ENCODE measurements at regions of chr11 and their contacts with region 1.

Region 1: DNA sequence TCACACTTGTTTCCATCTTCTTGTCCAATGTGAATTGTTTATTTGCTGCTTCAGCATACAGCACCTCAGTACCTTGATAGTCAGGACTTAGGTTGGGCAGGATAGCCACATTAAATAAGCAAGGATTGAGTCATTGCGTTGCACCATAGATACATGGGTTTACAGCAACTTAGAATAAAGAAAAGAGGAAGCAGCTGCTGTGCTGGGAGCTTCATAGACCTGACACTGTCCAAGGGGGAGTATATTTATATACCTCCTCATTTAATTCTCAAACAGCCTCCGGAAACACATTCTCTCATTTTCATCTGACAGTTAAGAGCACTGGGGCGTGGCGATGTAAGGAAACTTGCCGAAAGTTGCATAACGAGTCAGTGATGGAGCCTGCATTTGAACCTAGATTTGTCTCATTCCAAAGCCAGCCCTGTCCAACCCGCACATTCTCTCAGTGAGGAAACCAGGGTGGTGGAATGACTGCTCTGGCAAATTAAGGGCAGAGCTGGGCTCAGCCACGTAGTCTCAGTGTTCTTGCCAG is 42.2 kb downstream of the UBASH3B start:
- DNase-seq: peak; percentile 36 to 72 (median 53)
- H3K4me3 ChIP-seq: peak overlapping the region in 1 of 2 donors; percentile 39
- H3K4me3 Mint-ChIP-seq: peak overlapping the region; percentile 42 to 87 (median 76)
- H3K27ac ChIP-seq: peak overlapping the region; percentile 64
- H3K27ac Mint-ChIP-seq: peak overlapping the region; percentile 81 to 96 (median 93)
- H3K4me1 ChIP-seq: peaks cover 89% of the 10 kb centered on the region
- H3K4me1 Mint-ChIP-seq: peaks cover 66 to 93% (median 81%) of the 10 kb centered on the region in 4 donors
- H3K27me3 ChIP-seq: no peaks in the 10 kb centered on the region
- H3K27me3 Mint-ChIP-seq: no peaks in the 10 kb centered on the region

Region 2: DNA sequence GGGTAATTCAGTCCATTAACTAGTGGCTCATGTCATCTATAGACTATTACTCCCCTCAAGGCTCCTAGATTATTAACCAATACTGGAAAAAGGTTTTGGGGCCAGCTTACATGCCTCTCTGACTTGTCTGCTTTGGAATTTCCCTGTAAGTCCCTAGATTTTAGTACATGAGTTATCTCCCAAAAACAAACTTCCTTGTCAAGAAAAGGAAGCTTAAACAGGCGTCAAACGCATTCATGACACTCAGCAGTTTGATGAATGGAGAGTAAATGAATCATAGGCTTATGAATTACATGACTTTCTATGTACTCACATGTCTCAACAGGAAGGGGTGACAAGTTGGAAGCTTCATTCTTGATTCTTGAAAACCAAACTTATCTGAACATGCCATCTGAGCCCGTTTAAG is 652.5 kb before region 1 on chr11:
- CTCF ChIA-PET with region 1: no interaction called
- POLR2A ChIA-PET with region 1: no interaction called
- intact Hi-C with region 1: no loop called
- DNase-seq: no peak
- H3K4me3 ChIP-seq: no peak overlapping the region
- H3K4me3 Mint-ChIP-seq: no peak overlapping the region
- H3K27ac ChIP-seq: no peak overlapping the region
- H3K27ac Mint-ChIP-seq: no peak overlapping the region
- H3K4me1 ChIP-seq: no peaks in the 10 kb centered on the region
- H3K4me1 Mint-ChIP-seq: no peaks in the 10 kb centered on the region
- H3K27me3 ChIP-seq: no peaks in the 10 kb centered on the region
- H3K27me3 Mint-ChIP-seq: peaks cover 5 to 9% of the 10 kb centered on the region in 2 donors

Region 3: GRCh38 chr11:122655527-122656072 is 42.1 kb before region 1 on chr11 and contains the start of gene UBASH3B:
- CTCF ChIA-PET with region 1: interaction called, 69 read pairs
- POLR2A ChIA-PET with region 1: interaction called, 120 read pairs
- intact Hi-C with region 1: loop called (anchors 1 kb)
- DNase-seq: peak; percentile 63 to 68 (median 66)
- H3K4me3 ChIP-seq: peak within 1 kb of the TSS; percentile 55 to 86
- H3K4me3 Mint-ChIP-seq: peak within 1 kb of the TSS; percentile 97 to 98 (median 98)
- H3K27ac ChIP-seq: peak within 1 kb of the TSS; percentile 66
- H3K27ac Mint-ChIP-seq: peak within 1 kb of the TSS; percentile 88 to 98 (median 95)
- H3K4me1 ChIP-seq: peaks cover 44% of the 10 kb centered on the region
- H3K4me1 Mint-ChIP-seq: peaks cover 20 to 53% (median 40%) of the 10 kb centered on the region in 4 donors
- H3K27me3 ChIP-seq: no peaks in the 10 kb centered on the region
- H3K27me3 Mint-ChIP-seq: no peaks in the 10 kb centered on the region
- total RNA-seq, gene UBASH3B: 26.6 to 30.9 TPM

Region 4: GRCh38 chr11:122673701-122674100 is 24.0 kb before region 1 on chr11:
- CTCF ChIA-PET with region 1: interaction called, 36 read pairs
- POLR2A ChIA-PET with region 1: interaction called, 58 read pairs
- intact Hi-C with region 1: loop called (anchors 2 kb)
- DNase-seq: no peak
- H3K4me3 ChIP-seq: no peak overlapping the region
- H3K4me3 Mint-ChIP-seq: peak overlapping the region in 4 of 8 donors; percentile 22 to 60 (median 34)
- H3K27ac ChIP-seq: no peak overlapping the region
- H3K27ac Mint-ChIP-seq: peak overlapping the region in 6 of 7 donors; percentile 36 to 77 (median 61)
- H3K4me1 ChIP-seq: peaks cover 90% of the 10 kb centered on the region
- H3K4me1 Mint-ChIP-seq: peaks cover 50 to 91% (median 72%) of the 10 kb centered on the region in 4 donors
- H3K27me3 ChIP-seq: no peaks in the 10 kb centered on the region
- H3K27me3 Mint-ChIP-seq: no peaks in the 10 kb centered on the region

Region 5: DNA sequence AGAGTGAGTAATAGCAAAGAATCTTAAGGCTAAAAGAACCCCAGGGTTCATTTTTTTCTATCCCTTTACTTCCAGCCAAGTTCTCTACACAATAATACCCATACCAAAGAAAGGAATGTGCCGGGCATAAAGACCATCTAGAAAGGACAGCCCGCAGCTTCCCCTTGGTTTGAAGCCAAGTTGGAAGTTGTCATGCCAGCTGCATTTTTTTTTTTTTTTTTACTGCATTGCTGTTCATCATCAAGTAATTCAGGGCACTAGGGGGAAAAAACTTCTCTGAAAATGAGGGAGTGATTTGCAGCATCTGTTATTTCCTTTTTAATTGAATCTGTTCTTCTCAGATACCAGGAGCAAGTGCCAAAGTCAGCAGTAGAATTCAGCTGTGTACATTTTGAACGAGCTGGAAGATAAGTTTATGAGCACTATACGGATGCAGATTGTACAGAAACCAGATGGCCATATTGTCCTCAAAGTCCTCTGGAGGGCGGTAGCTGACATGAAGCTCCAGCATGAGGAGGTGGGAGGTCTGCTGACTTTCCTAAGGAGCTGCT is 14.2 kb after region 1 on chr11:
- CTCF ChIA-PET with region 1: interaction called, 5 read pairs
- POLR2A ChIA-PET with region 1: interaction called, 15 read pairs
- intact Hi-C with region 1: no loop called
- DNase-seq: no peak
- H3K4me3 ChIP-seq: no peak overlapping the region
- H3K4me3 Mint-ChIP-seq: no peak overlapping the region
- H3K27ac ChIP-seq: no peak overlapping the region
- H3K27ac Mint-ChIP-seq: peak overlapping the region in 1 of 7 donors; percentile 36
- H3K4me1 ChIP-seq: peaks cover 9% of the 10 kb centered on the region
- H3K4me1 Mint-ChIP-seq: peaks cover 18 to 54% (median 31%) of the 10 kb centered on the region in 4 donors
- H3K27me3 ChIP-seq: no peaks in the 10 kb centered on the region
- H3K27me3 Mint-ChIP-seq: no peaks in the 10 kb centered on the region

Region 6: DNA sequence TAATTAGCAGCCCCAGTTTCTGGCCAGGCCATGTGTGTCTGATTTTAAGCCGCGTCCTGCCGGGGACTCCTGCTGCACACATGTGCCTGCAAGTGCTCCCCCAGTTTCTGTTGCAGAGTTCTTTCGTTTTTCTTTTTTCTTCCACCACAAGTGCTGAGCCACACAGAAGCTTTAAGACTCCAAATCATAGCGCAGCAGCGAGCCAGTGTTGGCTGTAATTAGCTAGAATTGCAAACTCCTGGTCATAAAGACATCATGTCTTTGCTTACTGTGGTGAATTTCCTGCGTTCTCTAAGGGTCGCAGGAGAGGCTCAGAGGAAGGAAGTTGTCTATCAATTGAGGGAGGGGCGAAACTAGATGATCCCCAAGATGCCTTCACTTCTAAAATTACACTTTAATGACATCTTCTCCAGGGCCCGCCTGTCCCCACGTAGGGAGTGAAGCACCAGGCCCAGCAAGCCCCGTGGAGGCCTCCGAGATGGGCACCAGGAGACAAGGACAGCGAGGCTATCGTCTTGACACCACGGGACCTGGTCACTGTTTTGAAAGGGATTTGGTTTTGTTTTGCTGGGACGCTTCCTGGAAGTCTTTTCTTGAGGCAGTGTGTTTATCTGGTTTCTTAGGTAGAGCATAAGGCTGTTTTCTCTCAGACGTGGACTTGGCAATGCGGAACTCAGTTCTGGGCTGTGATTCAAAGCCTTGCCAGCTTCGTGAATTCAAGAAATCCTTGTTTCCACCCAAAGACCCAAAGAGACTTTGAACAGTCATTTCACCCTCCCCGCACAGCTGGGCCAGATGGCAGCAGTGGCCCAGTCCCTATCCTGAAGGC is 29.6 kb after region 1 on chr11:
- CTCF ChIA-PET with region 1: interaction called, 7 read pairs
- POLR2A ChIA-PET with region 1: interaction called, 42 read pairs
- intact Hi-C with region 1: loop called (anchors 2 kb)
- DNase-seq: peak in 4 of 5 donors; percentile 38 to 50 (median 47)
- H3K4me3 ChIP-seq: peak overlapping the region; percentile 9 to 38
- H3K4me3 Mint-ChIP-seq: peak overlapping the region; percentile 79 to 93 (median 88)
- H3K27ac ChIP-seq: peak overlapping the region; percentile 59
- H3K27ac Mint-ChIP-seq: peak overlapping the region; percentile 92 to 99 (median 95)
- H3K4me1 ChIP-seq: peaks cover 67% of the 10 kb centered on the region
- H3K4me1 Mint-ChIP-seq: peaks cover 51 to 66% (median 59%) of the 10 kb centered on the region in 4 donors
- H3K27me3 ChIP-seq: no peaks in the 10 kb centered on the region
- H3K27me3 Mint-ChIP-seq: no peaks in the 10 kb centered on the region

Region 7: GRCh38 chr11:122749005-122749687 is 51.4 kb after region 1 on chr11:
- CTCF ChIA-PET with region 1: interaction called, 86 read pairs
- POLR2A ChIA-PET with region 1: interaction called, 131 read pairs
- intact Hi-C with region 1: loop called (anchors 1 kb)
- DNase-seq: peak; percentile 31 to 70 (median 49)
- H3K4me3 ChIP-seq: no peak overlapping the region
- H3K4me3 Mint-ChIP-seq: peak overlapping the region in 5 of 8 donors; percentile 19 to 56 (median 47)
- H3K27ac ChIP-seq: no peak overlapping the region
- H3K27ac Mint-ChIP-seq: peak overlapping the region in 5 of 7 donors; percentile 31 to 78 (median 65)
- H3K4me1 ChIP-seq: peaks cover 56% of the 10 kb centered on the region
- H3K4me1 Mint-ChIP-seq: peaks cover 20 to 60% (median 40%) of the 10 kb centered on the region in 4 donors
- H3K27me3 ChIP-seq: no peaks in the 10 kb centered on the region
- H3K27me3 Mint-ChIP-seq: no peaks in the 10 kb centered on the region

Region 8: GRCh38 chr11:122772945-122773344 is 75.2 kb after region 1 on chr11:
- CTCF ChIA-PET with region 1: no interaction called
- POLR2A ChIA-PET with region 1: no interaction called
- intact Hi-C with region 1: no loop called
- DNase-seq: no peak
- H3K4me3 ChIP-seq: no peak overlapping the region
- H3K4me3 Mint-ChIP-seq: no peak overlapping the region
- H3K27ac ChIP-seq: no peak overlapping the region
- H3K27ac Mint-ChIP-seq: peak overlapping the region in 2 of 7 donors; percentile 75 to 76
- H3K4me1 ChIP-seq: no peaks in the 10 kb centered on the region
- H3K4me1 Mint-ChIP-seq: peaks cover 7 to 27% (median 14%) of the 10 kb centered on the region in 4 donors
- H3K27me3 ChIP-seq: no peaks in the 10 kb centered on the region
- H3K27me3 Mint-ChIP-seq: no peaks in the 10 kb centered on the region

Measured in CD4-positive, alpha-beta memory T cell (primary cell).